ENCODE measurements at regions of chr15 and their contacts with region 1.

Region 1: DNA sequence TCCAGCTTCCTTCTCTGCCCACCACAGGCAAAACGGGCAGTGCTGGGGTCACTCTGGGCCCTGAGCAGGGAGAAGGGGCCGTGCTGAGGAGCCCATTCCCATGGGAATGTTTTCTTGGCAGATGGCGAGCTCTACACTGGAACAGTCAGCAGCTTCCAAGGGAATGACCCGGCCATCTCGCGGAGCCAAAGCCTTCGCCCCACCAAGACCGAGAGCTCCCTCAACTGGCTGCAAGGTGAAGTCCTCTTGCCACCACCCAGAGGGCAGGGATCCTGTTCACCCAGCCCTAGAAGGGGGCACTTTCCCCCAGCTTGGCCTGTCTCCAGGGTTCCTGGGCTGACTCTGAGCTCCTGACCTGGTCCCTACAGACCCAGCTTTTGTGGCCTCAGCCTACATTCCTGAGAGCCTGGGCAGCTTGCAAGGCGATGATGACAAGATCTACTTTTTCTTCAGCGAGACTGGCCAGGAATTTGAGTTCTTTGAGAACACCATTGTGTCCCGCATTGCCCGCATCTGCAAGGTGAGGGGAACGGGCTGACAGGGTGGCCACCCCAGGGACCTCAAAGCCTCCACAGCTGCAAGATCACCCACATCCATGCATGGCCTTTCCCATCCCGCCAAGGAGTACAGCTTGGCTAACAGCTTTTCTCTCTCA is 12.4 kb downstream of the CIB1 start:
- DNase-seq: peak; percentile 74 to 75
- H3K4me3 ChIP-seq: no peak overlapping the region
- H3K4me3 Mint-ChIP-seq: no peak overlapping the region
- H3K27ac Mint-ChIP-seq: no peak overlapping the region
- H3K4me1 ChIP-seq: no peaks in the 10 kb centered on the region
- H3K4me1 Mint-ChIP-seq: no peaks in the 10 kb centered on the region
- H3K27me3 ChIP-seq: no peaks in the 10 kb centered on the region
- H3K27me3 Mint-ChIP-seq: no peaks in the 10 kb centered on the region
- CTCF ChIP-seq: peak; percentile 56 to 66

Region 2: DNA sequence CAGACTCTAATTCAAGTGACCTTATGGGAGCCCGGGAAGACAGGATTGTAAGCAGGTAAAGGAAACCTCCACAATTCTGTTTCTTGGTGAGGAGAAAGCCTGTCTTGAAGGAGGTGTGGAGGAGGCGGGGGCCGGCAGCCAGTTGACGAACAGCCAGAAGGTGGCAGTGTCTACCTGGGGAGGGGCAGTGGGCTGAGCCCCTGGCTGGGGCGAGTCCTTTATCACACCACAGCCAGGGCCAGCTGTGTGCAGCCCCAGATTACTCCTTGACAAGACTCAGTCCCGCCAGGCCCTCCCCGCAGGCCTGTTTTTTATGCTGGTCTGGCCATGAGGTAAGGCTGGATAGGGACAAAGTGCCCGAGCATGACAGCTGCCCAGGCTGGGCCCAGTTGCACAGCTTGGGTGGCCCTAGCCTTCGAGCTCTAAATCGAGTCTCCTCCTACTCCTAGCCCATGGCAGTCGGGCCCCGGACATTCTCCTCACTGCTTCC is 78.2 kb before region 1 on chr15:
- CTCF ChIA-PET with region 1: interaction called, 39 read pairs
- POLR2A ChIA-PET with region 1: no interaction called
- intact Hi-C with region 1: loop called (anchors 1 kb)
- DNase-seq: peak; percentile 83 to 88
- H3K4me3 ChIP-seq: no peak overlapping the region
- H3K4me3 Mint-ChIP-seq: no peak overlapping the region
- H3K27ac Mint-ChIP-seq: no peak overlapping the region
- H3K4me1 ChIP-seq: no peaks in the 10 kb centered on the region
- H3K4me1 Mint-ChIP-seq: peaks cover 7% of the 10 kb centered on the region
- H3K27me3 ChIP-seq: no peaks in the 10 kb centered on the region
- H3K27me3 Mint-ChIP-seq: no peaks in the 10 kb centered on the region
- CTCF ChIP-seq: peak; percentile 79 to 91

Region 3: DNA sequence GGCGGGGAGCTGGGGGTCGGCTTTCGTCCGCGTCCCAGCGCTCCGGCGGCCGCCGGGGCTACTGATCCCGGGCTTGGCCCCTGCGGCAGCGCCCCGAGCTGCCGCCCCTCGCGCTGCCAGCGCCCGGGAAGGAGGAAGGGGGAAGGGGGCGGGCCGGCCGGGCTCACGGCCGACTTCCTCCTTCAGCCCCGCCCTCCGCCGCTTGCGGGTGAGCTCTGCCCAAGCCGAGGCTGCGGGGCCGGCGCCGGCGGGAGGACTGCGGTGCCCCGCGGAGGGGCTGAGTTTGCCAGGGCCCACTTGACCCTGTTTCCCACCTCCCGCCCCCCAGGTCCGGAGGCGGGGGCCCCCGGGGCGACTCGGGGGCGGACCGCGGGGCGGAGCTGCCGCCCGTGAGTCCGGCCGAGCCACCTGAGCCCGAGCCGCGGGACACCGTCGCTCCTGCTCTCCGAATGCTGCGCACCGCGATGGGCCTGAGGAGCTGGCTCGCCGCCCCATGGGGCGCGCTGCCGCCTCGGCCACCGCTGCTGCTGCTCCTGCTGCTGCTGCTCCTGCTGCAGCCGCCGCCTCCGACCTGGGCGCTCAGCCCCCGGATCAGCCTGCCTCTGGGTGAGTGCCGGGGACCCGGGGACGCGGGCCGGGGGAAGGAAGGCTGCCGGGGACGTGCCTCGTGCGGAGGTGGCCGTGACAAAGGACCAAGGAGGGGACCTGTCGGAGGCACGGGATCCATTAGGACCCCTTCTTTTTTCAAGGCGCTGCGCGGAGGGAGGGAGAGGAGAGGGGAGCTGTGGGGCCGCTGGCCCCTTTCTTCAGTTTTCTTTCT is 20.0 kb before region 1 on chr15 and contains the start of gene SEMA4B:
- CTCF ChIA-PET with region 1: interaction called, 13 read pairs
- POLR2A ChIA-PET with region 1: no interaction called
- intact Hi-C with region 1: no loop called
- DNase-seq: peak; percentile 58 to 78
- H3K4me3 ChIP-seq: peak within 1 kb of the TSS; percentile 90
- H3K4me3 Mint-ChIP-seq: peak within 1 kb of the TSS; percentile 79
- H3K27ac Mint-ChIP-seq: peak within 1 kb of the TSS; percentile 61
- H3K4me1 ChIP-seq: no peaks in the 10 kb centered on the region
- H3K4me1 Mint-ChIP-seq: no peaks in the 10 kb centered on the region
- H3K27me3 ChIP-seq: no peaks in the 10 kb centered on the region
- H3K27me3 Mint-ChIP-seq: no peaks in the 10 kb centered on the region
- CTCF ChIP-seq: no peak
- total RNA-seq, gene SEMA4B: 13.9 and 14.6 TPM in 2 replicates

Region 4: DNA sequence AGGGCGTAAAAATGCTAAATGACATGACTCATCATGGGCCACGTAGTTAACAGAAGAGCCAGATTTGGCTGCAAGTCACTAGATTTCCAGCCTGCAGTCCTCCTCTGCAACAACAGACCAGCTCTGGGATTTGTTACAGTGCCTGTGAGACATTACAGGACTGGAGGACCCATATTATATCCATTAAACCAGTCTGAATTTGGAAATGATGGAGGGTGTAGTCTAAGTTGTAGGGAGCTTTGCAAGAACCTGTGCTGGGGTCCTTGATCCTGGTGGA is 141.5 kb after region 1 on chr15:
- CTCF ChIA-PET with region 1: no interaction called
- POLR2A ChIA-PET with region 1: no interaction called
- intact Hi-C with region 1: no loop called
- DNase-seq: no peak
- H3K4me3 ChIP-seq: no peak overlapping the region
- H3K4me3 Mint-ChIP-seq: no peak overlapping the region
- H3K27ac Mint-ChIP-seq: no peak overlapping the region
- H3K4me1 ChIP-seq: peaks cover 34% of the 10 kb centered on the region
- H3K4me1 Mint-ChIP-seq: peaks cover 20% of the 10 kb centered on the region
- H3K27me3 ChIP-seq: no peaks in the 10 kb centered on the region
- H3K27me3 Mint-ChIP-seq: no peaks in the 10 kb centered on the region
- CTCF ChIP-seq: no peak

Region 5: GRCh38 chr15:90400406-90401314 is 179.3 kb after region 1 on chr15:
- CTCF ChIA-PET with region 1: no interaction called
- POLR2A ChIA-PET with region 1: no interaction called
- intact Hi-C with region 1: no loop called
- DNase-seq: peak; percentile 80 to 84
- H3K4me3 ChIP-seq: no peak overlapping the region
- H3K4me3 Mint-ChIP-seq: peak overlapping the region; percentile 33
- H3K27ac Mint-ChIP-seq: peak overlapping the region; percentile 96
- H3K4me1 ChIP-seq: peaks cover 41% of the 10 kb centered on the region
- H3K4me1 Mint-ChIP-seq: peaks cover 34% of the 10 kb centered on the region
- H3K27me3 ChIP-seq: no peaks in the 10 kb centered on the region
- H3K27me3 Mint-ChIP-seq: no peaks in the 10 kb centered on the region
- CTCF ChIP-seq: no peak

Measured in Caco-2 (cell line).